Adrenal gland (tissue), 19 donors: ENCODE measurements at regions of chrX and their contacts with region 1.

Region 1: GRCh38 chrX:30190426-30190825 is 24.9 kb upstream of the MAGEB2 start:
- DNase-seq: no peak
- H3K4me3 ChIP-seq: no peak overlapping the region
- H3K27ac ChIP-seq: no peak overlapping the region
- H3K4me1 ChIP-seq: no peaks in the 10 kb centered on the region
- H3K27me3 ChIP-seq: no peaks in the 10 kb centered on the region
- CTCF ChIP-seq: no peak
- POLR2A ChIP-seq: no peak

Region 2: GRCh38 chrX:30005813-30006212 is 184.6 kb before region 1 on chrX:
- intact Hi-C with region 1: no loop called
- DNase-seq: no peak
- H3K4me3 ChIP-seq: no peak overlapping the region
- H3K27ac ChIP-seq: no peak overlapping the region
- H3K4me1 ChIP-seq: no peaks in the 10 kb centered on the region
- H3K27me3 ChIP-seq: no peaks in the 10 kb centered on the region
- CTCF ChIP-seq: no peak
- POLR2A ChIP-seq: no peak

Region 3: GRCh38 chrX:30141966-30142365 is 48.5 kb before region 1 on chrX:
- intact Hi-C with region 1: loop called in 1 of 2 experiments (anchors 5 kb)
- DNase-seq: peak in 6 of 7 donors; percentile 27 to 51 (median 38)
- H3K4me3 ChIP-seq: no peak overlapping the region
- H3K27ac ChIP-seq: no peak overlapping the region
- H3K4me1 ChIP-seq: no peaks in the 10 kb centered on the region
- H3K27me3 ChIP-seq: no peaks in the 10 kb centered on the region
- CTCF ChIP-seq: peak; percentile 11 to 58 (median 50)
- POLR2A ChIP-seq: no peak